CD8-positive, alpha-beta T cell (primary cell): ENCODE measurements at regions of chr1 and their contacts with region 1.

Region 1: DNA sequence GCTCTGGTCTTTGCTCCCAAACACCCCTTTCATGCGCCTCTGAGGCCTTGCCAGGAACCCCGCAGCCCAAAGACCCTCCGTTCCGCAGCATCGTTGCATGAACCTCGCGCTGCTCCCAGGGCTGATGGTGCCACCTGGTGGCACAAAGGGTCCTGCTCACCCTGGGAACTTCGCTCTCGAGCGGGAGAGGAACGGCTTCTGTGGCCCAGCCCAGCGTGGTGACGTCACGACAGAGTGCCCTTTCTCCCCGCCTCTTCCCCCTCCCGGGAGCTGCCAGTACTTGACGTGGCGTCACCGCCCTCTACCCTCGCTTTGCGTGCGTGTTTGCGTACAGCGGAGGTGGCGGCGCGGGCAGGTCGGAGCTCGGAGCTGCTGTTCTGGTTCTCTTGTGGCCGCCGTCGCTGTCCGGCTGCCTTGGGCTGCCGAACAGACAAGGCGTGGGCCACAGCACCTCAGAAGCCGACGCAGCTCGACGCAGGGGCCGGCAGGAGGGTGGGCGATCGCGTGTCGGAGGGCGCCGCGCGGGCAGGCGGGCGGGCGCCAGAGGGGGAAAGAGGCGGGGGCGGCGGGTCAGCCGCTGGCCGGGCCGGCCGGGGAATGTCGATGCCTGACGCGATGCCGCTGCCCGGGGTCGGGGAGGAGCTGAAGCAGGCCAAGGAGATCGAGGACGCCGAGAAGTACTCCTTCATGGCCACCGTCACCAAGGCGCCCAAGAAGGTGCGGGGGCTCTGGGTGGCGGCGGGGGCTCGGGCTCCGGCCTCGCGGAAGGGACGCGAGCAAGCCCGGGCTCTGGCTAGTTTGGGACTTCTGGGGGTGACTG is at the start of gene AHCYL1:
- DNase-seq: peak; percentile 98 to 99 (median 99)
- ATAC-seq: peak; percentile 99
- H3K4me3 ChIP-seq: peak within 1 kb of the TSS; percentile 75 to 84
- H3K4me3 Mint-ChIP-seq: peak within 1 kb of the TSS; percentile 99
- H3K27ac ChIP-seq: peak within 1 kb of the TSS; percentile 72 to 84
- H3K27ac Mint-ChIP-seq: peak within 1 kb of the TSS; percentile 97
- H3K4me1 ChIP-seq: peaks cover 20% of the 10 kb centered on the region
- H3K4me1 Mint-ChIP-seq: peaks cover 45% of the 10 kb centered on the region
- H3K27me3 ChIP-seq: no peaks in the 10 kb centered on the region
- H3K27me3 Mint-ChIP-seq: no peaks in the 10 kb centered on the region
- CTCF ChIP-seq: peak; percentile 86
- total RNA-seq, gene AHCYL1: 5.3 to 5.5 TPM

Region 2: GRCh38 chr1:109493805-109494539 is 490.7 kb before region 1 on chr1 and contains the start of gene CYB561D1:
- CTCF ChIA-PET with region 1: interaction called, 4 read pairs
- POLR2A ChIA-PET with region 1: no interaction called
- intact Hi-C with region 1: loop called in 1 of 2 experiments (anchors 1 kb)
- DNase-seq: peak; percentile 79 to 95 (median 88)
- ATAC-seq: peak; percentile 90
- H3K4me3 ChIP-seq: peak within 1 kb of the TSS; percentile 94 to 95
- H3K4me3 Mint-ChIP-seq: peak within 1 kb of the TSS; percentile 95
- H3K27ac ChIP-seq: peak within 1 kb of the TSS; percentile 53 to 58
- H3K27ac Mint-ChIP-seq: peak within 1 kb of the TSS; percentile 85
- H3K4me1 ChIP-seq: peaks cover 49% of the 10 kb centered on the region
- H3K4me1 Mint-ChIP-seq: peaks cover 52% of the 10 kb centered on the region
- H3K27me3 ChIP-seq: no peaks in the 10 kb centered on the region
- H3K27me3 Mint-ChIP-seq: no peaks in the 10 kb centered on the region
- CTCF ChIP-seq: peak; percentile 88
- total RNA-seq, gene CYB561D1: 10.2 to 12.3 TPM

Region 3: GRCh38 chr1:109643385-109644230 is 341.1 kb before region 1 on chr1:
- CTCF ChIA-PET with region 1: interaction called, 68 read pairs
- POLR2A ChIA-PET with region 1: interaction called, 3 read pairs
- intact Hi-C with region 1: loop called (anchors 1 kb)
- DNase-seq: peak; percentile 73 to 94 (median 86)
- ATAC-seq: peak; percentile 94
- H3K4me3 ChIP-seq: no peak overlapping the region
- H3K4me3 Mint-ChIP-seq: no peak overlapping the region
- H3K27ac ChIP-seq: no peak overlapping the region
- H3K27ac Mint-ChIP-seq: peak overlapping the region; percentile 45
- H3K4me1 ChIP-seq: peaks cover 13% of the 10 kb centered on the region
- H3K4me1 Mint-ChIP-seq: peaks cover 6% of the 10 kb centered on the region
- H3K27me3 ChIP-seq: no peaks in the 10 kb centered on the region
- H3K27me3 Mint-ChIP-seq: peaks cover 4% of the 10 kb centered on the region
- CTCF ChIP-seq: peak; percentile 81

Region 4: GRCh38 chr1:109790735-109791494 is 193.8 kb before region 1 on chr1:
- CTCF ChIA-PET with region 1: interaction called, 656 read pairs
- POLR2A ChIA-PET with region 1: interaction called, 10 read pairs
- intact Hi-C with region 1: loop called in 1 of 2 experiments (anchors 5 kb)
- DNase-seq: peak; percentile 55 to 90 (median 84)
- ATAC-seq: peak; percentile 94
- H3K4me3 ChIP-seq: no peak overlapping the region
- H3K4me3 Mint-ChIP-seq: no peak overlapping the region
- H3K27ac ChIP-seq: peak overlapping the region; percentile 14 to 74
- H3K27ac Mint-ChIP-seq: peak overlapping the region; percentile 85
- H3K4me1 ChIP-seq: peaks cover 59% of the 10 kb centered on the region
- H3K4me1 Mint-ChIP-seq: peaks cover 70% of the 10 kb centered on the region
- H3K27me3 ChIP-seq: no peaks in the 10 kb centered on the region
- H3K27me3 Mint-ChIP-seq: no peaks in the 10 kb centered on the region
- CTCF ChIP-seq: peak; percentile 54

Region 5: GRCh38 chr1:109904105-109904817 is 80.4 kb before region 1 on chr1:
- CTCF ChIA-PET with region 1: interaction called, 11 read pairs
- POLR2A ChIA-PET with region 1: interaction called, 3 read pairs
- intact Hi-C with region 1: loop called in 1 of 2 experiments (anchors 1 kb)
- DNase-seq: no peak
- ATAC-seq: no peak
- H3K4me3 ChIP-seq: no peak overlapping the region
- H3K4me3 Mint-ChIP-seq: no peak overlapping the region
- H3K27ac ChIP-seq: no peak overlapping the region
- H3K27ac Mint-ChIP-seq: no peak overlapping the region
- H3K4me1 ChIP-seq: peaks cover 19% of the 10 kb centered on the region
- H3K4me1 Mint-ChIP-seq: peaks cover 28% of the 10 kb centered on the region
- H3K27me3 ChIP-seq: no peaks in the 10 kb centered on the region
- H3K27me3 Mint-ChIP-seq: no peaks in the 10 kb centered on the region
- CTCF ChIP-seq: no peak

Region 6: GRCh38 chr1:110176299-110176956 is 191.8 kb after region 1 on chr1:
- CTCF ChIA-PET with region 1: no interaction called
- POLR2A ChIA-PET with region 1: no interaction called
- intact Hi-C with region 1: no loop called
- DNase-seq: no peak
- ATAC-seq: no peak
- H3K4me3 ChIP-seq: no peak overlapping the region
- H3K4me3 Mint-ChIP-seq: no peak overlapping the region
- H3K27ac ChIP-seq: no peak overlapping the region
- H3K27ac Mint-ChIP-seq: no peak overlapping the region
- H3K4me1 ChIP-seq: no peaks in the 10 kb centered on the region
- H3K4me1 Mint-ChIP-seq: no peaks in the 10 kb centered on the region
- H3K27me3 ChIP-seq: no peaks in the 10 kb centered on the region
- H3K27me3 Mint-ChIP-seq: peaks cover 5% of the 10 kb centered on the region
- CTCF ChIP-seq: no peak

Region 7: GRCh38 chr1:110338886-110339406 is 354.3 kb after region 1 on chr1 and contains the start of gene RBM15:
- CTCF ChIA-PET with region 1: no interaction called
- POLR2A ChIA-PET with region 1: no interaction called
- intact Hi-C with region 1: loop called in 1 of 2 experiments (anchors 5 kb)
- DNase-seq: peak; percentile 92 to 100 (median 96)
- ATAC-seq: peak; percentile 74
- H3K4me3 ChIP-seq: peak within 1 kb of the TSS; percentile 91 to 97
- H3K4me3 Mint-ChIP-seq: no peak within 1 kb of the TSS
- H3K27ac ChIP-seq: peak within 1 kb of the TSS; percentile 87 to 98
- H3K27ac Mint-ChIP-seq: no peak within 1 kb of the TSS
- H3K4me1 ChIP-seq: peaks cover 49% of the 10 kb centered on the region
- H3K4me1 Mint-ChIP-seq: peaks cover 56% of the 10 kb centered on the region
- H3K27me3 ChIP-seq: no peaks in the 10 kb centered on the region
- H3K27me3 Mint-ChIP-seq: no peaks in the 10 kb centered on the region
- CTCF ChIP-seq: no peak
- total RNA-seq, gene RBM15: 57.1 to 59.3 TPM